ENCODE measurements at regions of chr10 and their contacts with region 1.

Region 1: DNA sequence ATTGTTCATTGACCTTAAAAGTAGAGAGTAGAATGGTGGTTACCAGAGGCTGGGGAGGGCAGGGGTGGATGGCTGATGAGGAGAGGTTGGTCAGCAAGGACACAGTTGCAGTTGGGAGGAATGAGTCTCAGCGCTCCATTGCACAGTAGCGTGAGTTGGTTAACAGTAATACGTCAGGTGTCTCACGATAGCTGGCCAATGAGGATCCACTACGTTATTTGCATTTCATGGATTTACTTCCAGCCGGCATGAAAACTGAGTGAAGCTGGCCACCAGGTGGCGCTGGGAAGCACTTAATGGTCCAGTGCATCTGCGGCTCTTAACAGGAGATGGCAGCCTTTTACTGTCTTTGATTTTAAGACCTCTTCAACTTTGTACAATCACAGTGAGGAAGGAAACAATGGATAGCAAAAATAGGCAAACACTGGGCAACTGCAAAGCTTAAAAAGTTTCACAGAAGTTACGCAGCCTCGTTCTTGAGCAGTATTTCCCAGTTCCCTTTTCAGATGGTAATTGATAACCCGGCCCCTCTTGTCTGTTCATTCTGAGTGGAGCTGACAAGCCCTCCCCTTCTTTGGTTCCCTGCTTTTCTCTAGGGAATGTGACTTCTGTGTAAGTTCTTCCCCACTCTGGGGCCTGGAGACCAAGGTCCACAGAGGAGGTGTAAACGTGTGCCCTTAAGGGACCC is 23.7 kb downstream of the AKR1E2 start:
- DNase-seq: peak; percentile 79 to 99 (median 92)

Region 2: DNA sequence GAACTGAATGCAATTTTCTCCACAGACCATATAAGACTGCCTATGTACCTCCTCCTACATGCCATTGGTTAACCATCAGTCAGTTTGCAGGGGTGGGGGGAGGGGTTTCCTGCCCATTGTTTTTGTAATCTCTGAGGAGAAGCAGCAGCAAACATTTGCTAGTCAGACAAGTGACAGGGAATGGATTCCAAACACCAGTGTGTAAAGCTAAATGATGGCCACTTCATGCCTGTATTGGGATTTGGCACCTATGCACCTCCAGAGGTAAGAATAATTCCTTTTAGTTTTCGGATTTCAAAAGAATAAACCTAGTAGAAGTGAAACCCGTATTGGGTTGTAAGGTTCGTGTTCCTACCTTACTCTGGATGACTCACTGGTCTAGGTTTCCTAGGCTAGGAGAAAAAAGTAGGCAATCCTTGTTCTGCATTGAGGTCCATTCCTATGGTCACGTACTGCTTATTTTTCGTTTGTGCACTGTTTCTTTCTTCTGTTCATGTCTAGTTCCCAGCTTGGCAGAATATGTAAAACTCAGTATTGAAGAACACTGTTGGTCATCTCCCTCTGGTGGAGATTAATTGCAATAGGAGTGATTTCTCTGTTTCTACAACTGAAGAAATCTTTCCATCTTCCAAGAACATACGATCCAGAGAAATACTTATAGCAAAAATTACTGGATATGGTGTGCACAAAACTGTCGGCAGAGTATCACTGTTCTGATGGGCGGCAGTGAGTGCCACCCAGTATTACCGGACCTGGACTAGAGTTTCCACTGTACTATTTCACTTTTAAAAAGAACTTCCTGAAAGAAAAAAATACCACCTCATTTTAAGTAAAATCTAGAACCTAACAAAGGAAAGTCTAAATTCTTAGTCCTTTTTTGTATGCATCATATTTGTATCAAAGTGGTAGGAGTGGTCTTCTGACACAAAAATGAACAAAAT is 244.8 kb after region 1 on chr10 and contains the start of gene AKR1C3:
- intact Hi-C with region 1: loop called (anchors 1 kb)
- DNase-seq: no peak

Region 3: GRCh38 chr10:5283305-5284158 is 433.8 kb after region 1 on chr10:
- intact Hi-C with region 1: loop called (anchors 2 kb)
- DNase-seq: peak in 3 of 10 donors; percentile 13 to 61 (median 15)

Region 4: DNA sequence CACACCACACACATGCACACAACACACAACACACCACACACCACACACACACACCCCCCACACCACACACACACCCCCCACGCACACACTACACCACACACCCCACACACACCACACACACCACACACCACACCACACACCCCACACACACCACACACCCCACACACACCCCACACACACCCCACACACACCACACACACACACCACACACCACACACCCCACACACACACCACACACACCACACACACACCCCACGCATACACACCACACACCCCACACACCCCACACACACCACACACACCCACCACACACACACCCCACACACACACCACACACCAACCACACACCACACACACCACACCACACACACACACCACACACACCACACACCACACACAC is 531.5 kb after region 1 on chr10:
- intact Hi-C with region 1: loop called (anchors 5 kb)
- DNase-seq: no peak

Region 5: DNA sequence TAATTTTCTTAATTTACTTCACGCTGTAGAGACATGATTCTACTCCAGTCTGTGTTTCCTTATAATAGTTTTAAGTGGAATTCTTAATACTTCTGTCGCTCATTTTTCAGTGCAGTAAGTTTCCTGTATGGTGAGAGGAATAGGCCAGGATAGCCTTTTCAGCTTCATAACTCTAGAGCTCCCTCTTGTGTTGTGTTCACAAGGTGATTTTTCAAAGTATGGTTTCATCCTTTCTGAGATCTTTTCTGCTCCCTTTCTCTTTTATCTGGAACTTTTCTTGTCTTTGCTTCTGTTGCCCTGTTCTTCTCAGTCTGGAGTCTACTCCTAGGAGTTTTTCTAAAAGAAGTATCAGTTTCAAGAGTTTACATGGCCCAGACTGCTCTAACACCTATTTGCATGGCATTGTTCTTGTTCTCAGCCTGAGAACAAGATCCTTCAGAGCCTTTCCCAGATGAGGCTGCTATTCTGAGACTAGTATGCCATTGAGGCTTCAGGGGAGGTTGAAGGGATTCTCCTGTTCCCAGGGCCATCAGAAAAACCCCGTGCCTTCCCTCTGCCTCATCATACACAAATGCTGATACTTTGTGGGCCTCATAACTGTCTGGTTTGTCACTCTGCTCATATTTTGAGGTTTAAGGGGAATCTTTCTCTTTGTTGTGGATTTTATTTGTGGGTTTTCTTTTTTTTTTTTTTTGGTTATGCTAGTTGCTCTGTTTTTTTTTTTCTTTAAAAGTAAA is 584.5 kb after region 1 on chr10:
- intact Hi-C with region 1: loop called (anchors 1 kb)
- DNase-seq: no peak

Region 6: DNA sequence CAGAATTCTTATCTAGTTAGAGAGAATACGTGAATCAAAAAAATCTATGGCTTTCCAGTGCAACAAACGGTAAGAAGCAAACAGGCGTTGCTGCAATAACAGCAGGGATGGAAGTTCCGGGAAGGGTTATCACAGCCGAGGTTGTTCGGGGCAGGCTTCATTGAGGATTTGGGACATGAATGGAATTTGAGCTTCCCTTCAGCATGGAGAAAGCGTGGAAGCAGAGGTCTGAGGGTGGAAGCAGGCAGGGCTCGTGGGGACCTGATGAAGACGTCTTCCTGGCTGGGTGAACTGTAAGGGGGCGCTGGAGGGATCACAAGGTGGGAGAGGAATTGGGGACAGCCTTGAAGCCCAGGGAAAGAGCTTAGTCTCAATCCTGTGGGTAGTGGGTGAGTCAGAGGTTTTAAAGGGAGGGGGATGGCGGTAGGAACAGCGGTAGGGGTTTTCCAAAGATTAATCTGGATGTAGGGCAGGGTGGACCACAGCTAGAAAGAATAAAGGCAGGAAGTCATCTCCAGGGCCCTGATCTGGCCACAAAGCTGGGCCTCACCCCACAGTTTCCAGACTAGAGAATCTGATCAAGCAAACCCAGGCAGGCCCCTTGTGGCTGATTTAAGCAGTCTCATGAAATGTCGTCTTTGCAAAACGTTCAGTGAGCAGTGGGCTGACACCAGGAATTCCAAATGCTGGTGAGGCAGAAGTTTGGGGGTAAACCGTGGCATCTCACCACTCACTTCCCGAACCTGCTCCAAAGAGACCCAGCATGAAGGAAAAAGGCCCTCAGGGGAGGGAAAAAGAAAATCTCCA is 740.2 kb after region 1 on chr10:
- intact Hi-C with region 1: no loop called
- DNase-seq: peak in 2 of 10 donors; percentile 9 to 28

Region 7: DNA sequence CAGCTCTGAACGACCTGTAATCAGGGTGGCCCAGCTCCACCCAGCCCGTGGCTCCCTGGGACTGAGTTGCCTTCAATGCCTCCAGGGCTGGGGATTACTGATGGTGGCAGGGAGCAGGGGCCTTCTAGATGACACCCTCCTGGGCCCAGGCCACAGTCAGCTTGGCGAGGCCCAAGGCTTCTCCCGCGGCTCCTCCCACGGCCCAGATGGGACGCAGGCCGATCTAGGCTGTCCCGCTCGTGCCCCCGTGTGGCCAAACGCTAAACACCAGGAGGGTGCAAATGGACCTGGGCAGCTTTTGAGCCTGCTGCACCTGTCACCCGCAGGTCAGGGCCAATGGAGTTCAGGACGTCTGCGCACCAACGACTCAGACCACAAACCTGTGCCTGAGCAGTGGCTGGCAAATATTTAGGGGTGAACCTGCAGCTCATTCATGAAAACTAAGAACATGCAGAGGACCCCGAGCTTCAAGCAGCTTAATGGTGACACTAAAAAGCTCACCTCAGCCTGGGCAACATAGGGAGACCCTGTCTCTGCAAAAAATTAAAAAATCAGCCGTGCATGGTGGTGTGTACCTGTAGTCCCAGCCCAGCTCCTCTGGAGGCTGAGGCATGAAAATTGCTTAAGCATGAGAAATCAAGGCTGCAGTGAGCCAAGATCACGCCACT is 773.5 kb after region 1 on chr10:
- intact Hi-C with region 1: loop called (anchors 10 kb)
- DNase-seq: peak; percentile 51 to 97 (median 83)